Transverse colon (tissue), 4 donors: ENCODE measurements at regions of chr2 and their contacts with region 1.

Region 1: DNA sequence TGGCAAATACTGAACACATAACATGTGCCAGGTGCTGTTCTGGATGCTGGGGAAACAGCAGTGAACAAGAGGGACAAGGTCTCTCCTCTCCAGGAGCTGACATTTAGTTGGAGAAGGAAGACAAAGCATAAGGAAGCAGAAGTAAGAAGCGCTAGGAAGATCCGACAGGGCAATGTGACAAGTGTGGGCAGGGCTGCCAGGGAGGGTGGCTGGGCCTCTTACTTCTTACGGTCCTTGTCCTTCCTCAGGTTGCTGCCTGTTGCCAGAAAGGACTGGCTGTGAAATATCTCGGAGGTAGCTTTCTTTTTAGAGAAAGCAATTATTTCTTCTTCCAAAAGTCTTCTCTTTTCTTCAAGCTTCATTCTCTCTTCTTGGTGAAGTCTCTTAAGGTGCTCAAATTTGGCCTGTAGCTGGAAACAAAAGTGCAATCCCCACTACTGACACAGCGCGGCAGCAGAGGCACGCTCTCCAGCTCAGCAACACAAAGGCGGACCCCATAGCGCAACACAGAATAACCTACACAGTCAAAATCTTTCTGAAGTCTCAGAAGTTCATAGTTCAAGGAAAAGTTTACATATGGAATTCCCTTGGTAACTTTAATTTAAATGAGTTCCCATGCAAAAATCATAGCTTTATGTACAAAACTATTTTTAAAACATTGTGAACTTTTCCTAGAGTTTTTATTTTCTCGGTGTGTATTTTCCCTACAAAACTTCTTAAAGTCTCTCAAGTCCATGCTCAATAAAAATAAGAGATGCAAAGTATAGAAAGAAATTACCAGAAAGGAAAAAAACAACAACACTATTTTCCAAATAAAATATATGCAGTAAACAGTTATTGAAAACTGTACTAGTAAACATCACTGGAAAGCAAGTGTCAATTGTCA is 67.7 kb downstream of the SEPTIN10 start:
- DNase-seq: peak; percentile 63
- H3K4me3 ChIP-seq: no peak overlapping the region
- H3K27ac ChIP-seq: no peak overlapping the region
- H3K4me1 ChIP-seq: peaks cover 0 to 3% (median 0%) of the 10 kb centered on the region in 4 donors
- H3K27me3 ChIP-seq: no peaks in the 10 kb centered on the region
- CTCF ChIP-seq: peak; percentile 83 to 93 (median 87)
- EP300 ChIP-seq: no peak
- POLR2A ChIP-seq: no peak

Region 2: GRCh38 chr2:109435901-109436598 is 110.0 kb before region 1 on chr2:
- in situ Hi-C with region 1: no loop called
- intact Hi-C with region 1: no loop called
- DNase-seq: no peak
- H3K4me3 ChIP-seq: no peak overlapping the region
- H3K27ac ChIP-seq: peak overlapping the region; percentile 11 to 60 (median 38)
- H3K4me1 ChIP-seq: peaks cover 0 to 5% (median 0%) of the 10 kb centered on the region in 4 donors
- H3K27me3 ChIP-seq: no peaks in the 10 kb centered on the region
- CTCF ChIP-seq: no peak
- EP300 ChIP-seq: peak; percentile 51
- POLR2A ChIP-seq: no peak

Region 3: DNA sequence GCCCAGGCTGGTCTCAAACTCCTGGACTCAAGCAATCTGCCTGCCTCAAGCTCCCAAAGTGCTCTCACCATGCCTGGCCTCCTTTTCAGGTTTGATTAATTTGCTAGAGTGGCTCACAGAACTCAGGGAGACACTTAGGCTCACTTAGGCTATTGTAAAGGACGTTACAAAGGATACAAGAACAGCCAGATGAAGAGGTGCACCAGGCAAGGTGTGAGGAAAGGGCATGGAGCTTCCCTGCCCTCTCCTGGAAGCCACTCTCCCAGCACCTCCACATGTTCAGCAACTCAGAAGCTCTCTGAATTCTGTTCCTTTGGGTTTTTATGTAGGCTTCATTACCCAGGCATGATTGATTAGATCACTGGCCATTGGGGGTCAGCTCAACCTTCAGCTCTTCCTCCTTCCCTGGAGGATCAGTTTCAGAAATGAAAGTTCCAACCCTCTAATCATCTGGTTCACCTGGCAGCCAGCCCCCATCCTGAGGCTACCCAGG is 169.3 kb after region 1 on chr2:
- in situ Hi-C with region 1: loop called in 1 of 4 experiments (anchors 10 kb)
- intact Hi-C with region 1: no loop called
- DNase-seq: peak; percentile 67
- H3K4me3 ChIP-seq: no peak overlapping the region
- H3K27ac ChIP-seq: peak overlapping the region in 1 of 4 donors; percentile 22
- H3K4me1 ChIP-seq: peaks cover 0 to 23% (median 2%) of the 10 kb centered on the region in 4 donors
- H3K27me3 ChIP-seq: no peaks in the 10 kb centered on the region
- CTCF ChIP-seq: peak; percentile 63 to 81 (median 76)
- EP300 ChIP-seq: no peak
- POLR2A ChIP-seq: no peak

Region 4: DNA sequence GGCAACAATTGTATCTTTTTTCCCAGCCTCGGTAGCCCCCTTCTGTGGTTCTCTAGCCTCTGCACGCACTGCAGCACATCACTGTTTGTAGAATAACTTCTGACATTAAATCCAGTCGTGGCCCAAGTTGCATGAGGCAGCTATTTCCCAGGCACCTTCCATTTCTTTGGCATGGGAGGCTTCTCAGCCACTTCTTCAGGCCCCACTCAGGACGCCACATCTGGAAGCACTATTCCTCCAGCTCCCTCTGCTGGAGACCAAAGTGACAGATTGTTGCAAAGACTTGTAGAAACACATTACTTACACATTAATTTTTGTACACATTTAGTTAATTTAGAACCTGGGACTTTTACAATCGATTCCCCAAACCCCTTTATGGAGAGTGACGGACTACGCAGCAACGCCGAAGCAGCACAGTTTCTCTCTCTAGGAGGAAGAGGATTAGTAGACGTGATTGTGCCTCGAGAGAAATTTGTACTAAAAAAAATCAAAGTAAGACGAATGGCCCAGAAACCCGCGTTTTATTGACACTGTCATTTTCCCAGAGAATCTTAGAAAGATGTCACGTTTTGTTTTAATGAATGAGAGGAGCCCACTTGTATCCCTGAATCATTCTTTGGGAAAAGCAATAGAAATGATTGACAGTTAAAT is 190.2 kb after region 1 on chr2:
- in situ Hi-C with region 1: no loop called
- intact Hi-C with region 1: loop called (anchors 5 kb)
- DNase-seq: peak; percentile 59
- H3K4me3 ChIP-seq: no peak overlapping the region
- H3K27ac ChIP-seq: no peak overlapping the region
- H3K4me1 ChIP-seq: no peaks in the 10 kb centered on the region
- H3K27me3 ChIP-seq: no peaks in the 10 kb centered on the region
- CTCF ChIP-seq: peak; percentile 63 to 82 (median 68)
- EP300 ChIP-seq: no peak
- POLR2A ChIP-seq: no peak